ENCODE measurements at regions of chr11 and their contacts with region 1.

Region 1: DNA sequence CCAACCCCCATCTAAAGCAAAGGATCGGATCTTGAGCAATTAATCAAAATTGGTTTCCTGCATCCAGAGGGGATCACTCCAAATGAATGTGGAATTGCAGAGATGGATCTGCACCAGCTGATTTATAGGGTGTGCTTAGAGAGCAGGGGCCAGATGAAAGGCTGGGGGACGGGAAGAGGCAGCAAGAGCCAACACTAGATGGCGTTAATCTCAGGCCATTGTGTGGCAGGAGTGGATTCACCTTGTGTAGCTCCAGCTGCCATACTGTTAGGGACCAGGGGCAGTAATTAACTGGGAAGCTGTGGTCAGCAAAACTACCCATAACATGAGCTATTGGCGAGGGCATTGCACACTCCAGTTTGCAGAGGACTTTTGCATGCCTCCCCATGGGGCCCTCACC is 35.6 kb downstream of the SERPINH1 start:
- DNase-seq: peak; percentile 61
- ATAC-seq: peak; percentile 90
- H3K4me3 Mint-ChIP-seq: no peak overlapping the region
- H3K27ac Mint-ChIP-seq: no peak overlapping the region
- H3K4me1 Mint-ChIP-seq: peaks cover 21% of the 10 kb centered on the region
- H3K27me3 Mint-ChIP-seq: no peaks in the 10 kb centered on the region; the same call in 1 of the 2 replicates
- CTCF ChIP-seq: no peak; the same call in 1 of the 2 replicates

Region 2: DNA sequence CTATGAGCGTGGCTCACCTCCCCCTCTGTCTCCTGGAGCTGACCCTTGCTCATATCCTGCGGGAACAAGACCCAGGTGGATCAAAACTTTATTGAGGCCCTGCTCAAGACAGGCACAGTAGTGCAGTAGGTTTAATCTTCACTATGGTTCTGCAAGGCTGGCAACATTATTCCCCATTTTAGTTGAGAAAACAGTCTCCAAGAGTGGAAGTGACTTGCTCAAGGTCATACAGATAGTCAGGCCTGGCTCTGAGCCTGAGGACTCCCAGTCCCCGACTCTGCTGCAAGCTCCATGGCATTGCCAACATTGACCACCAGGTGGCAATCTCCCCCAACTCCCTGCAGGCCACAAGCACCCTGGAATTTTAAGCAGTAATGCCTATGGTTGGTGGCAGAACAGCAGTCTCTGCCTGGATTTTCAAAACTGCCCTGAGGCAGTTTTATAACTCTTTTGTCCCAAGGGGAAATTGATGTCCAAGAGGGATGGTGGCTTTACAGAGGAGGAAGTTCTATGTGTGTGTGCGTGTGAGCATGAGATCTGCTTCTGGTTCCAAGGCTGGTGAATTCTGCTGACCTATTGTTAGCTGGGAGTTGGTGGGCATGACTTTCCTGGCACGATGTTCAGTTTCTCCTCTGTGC is 574.8 kb before region 1 on chr11:
- CTCF ChIA-PET with region 1: no interaction called
- POLR2A ChIA-PET with region 1: no interaction called
- DNase-seq: peak; percentile 91
- ATAC-seq: peak; percentile 99
- H3K4me3 Mint-ChIP-seq: no peak overlapping the region
- H3K27ac Mint-ChIP-seq: no peak overlapping the region
- H3K4me1 Mint-ChIP-seq: no peaks in the 10 kb centered on the region
- H3K27me3 Mint-ChIP-seq: peaks cover 4% of the 10 kb centered on the region
- CTCF ChIP-seq: peak; percentile 97

Region 3: GRCh38 chr11:75510004-75510722 is 87.5 kb before region 1 on chr11:
- CTCF ChIA-PET with region 1: no interaction called
- POLR2A ChIA-PET with region 1: no interaction called
- DNase-seq: no peak
- ATAC-seq: no peak
- H3K4me3 Mint-ChIP-seq: no peak overlapping the region
- H3K27ac Mint-ChIP-seq: no peak overlapping the region
- H3K4me1 Mint-ChIP-seq: no peaks in the 10 kb centered on the region
- H3K27me3 Mint-ChIP-seq: no peaks in the 10 kb centered on the region
- CTCF ChIP-seq: no peak

Region 4: GRCh38 chr11:75554258-75555022 is 43.2 kb before region 1 on chr11:
- CTCF ChIA-PET with region 1: interaction called, 10 read pairs
- POLR2A ChIA-PET with region 1: interaction called, 3 read pairs
- DNase-seq: peak; percentile 89
- ATAC-seq: peak; percentile 95
- H3K4me3 Mint-ChIP-seq: peak overlapping the region; percentile 32; the same call in 1 of the 2 replicates
- H3K27ac Mint-ChIP-seq: peak overlapping the region; percentile 96
- H3K4me1 Mint-ChIP-seq: peaks cover 48% of the 10 kb centered on the region
- H3K27me3 Mint-ChIP-seq: peaks cover 2% of the 10 kb centered on the region; the same call in 1 of the 2 replicates
- CTCF ChIP-seq: no peak

Region 5: GRCh38 chr11:75577207-75577606 is 20.4 kb before region 1 on chr11:
- CTCF ChIA-PET with region 1: interaction called, 110 read pairs
- POLR2A ChIA-PET with region 1: interaction called, 3 read pairs
- DNase-seq: peak; percentile 78
- ATAC-seq: peak; percentile 5; the same call in 1 of the 2 replicates
- H3K4me3 Mint-ChIP-seq: no peak overlapping the region
- H3K27ac Mint-ChIP-seq: no peak overlapping the region
- H3K4me1 Mint-ChIP-seq: peaks cover 18% of the 10 kb centered on the region
- H3K27me3 Mint-ChIP-seq: peaks cover 13% of the 10 kb centered on the region
- CTCF ChIP-seq: peak; percentile 56; the same call in 1 of the 2 replicates

Region 6: DNA sequence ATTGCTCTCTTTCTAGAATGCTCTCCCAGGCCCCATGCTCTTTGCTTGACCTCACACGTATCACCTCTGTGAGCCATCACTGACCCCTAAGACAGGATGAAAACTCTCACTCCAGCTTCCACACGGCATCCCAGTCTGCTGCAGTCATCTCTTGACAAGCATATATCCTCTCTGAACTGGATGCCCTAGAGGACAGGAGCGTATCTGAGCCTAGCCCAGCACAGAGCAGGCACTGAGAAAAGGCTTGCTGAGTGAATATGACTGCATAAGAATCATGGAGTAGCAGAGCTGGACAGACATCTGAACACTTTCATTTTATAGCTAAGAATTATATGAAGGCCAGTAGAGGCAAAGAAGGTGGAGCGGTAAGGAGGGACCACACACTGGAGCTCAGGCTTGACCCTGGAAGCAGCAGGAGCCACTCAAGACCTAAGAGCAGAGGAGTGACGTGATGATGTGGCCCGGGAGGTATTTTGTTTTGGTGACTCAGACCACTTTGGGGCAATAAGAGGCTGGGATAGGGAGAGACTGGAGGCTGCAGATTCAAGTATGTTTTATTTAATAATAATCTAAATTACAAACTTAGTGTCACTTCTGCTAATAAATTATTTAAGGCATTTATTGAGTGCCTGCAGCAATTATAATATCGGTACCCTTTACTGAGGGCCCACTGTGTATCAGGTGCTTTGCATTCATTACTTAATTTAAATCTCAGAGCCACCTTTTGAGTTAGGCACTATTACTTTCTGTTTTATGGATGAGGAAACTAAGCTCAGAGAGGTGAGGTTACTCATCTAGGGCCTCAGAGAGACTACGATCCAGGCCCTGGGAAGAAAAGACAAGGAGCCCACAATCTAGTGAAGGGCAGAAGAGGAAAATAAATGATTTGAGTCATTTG is 28.6 kb after region 1 on chr11:
- CTCF ChIA-PET with region 1: interaction called, 29 read pairs
- POLR2A ChIA-PET with region 1: no interaction called
- DNase-seq: no peak
- ATAC-seq: no peak
- H3K4me3 Mint-ChIP-seq: no peak overlapping the region
- H3K27ac Mint-ChIP-seq: no peak overlapping the region
- H3K4me1 Mint-ChIP-seq: peaks cover 26% of the 10 kb centered on the region
- H3K27me3 Mint-ChIP-seq: no peaks in the 10 kb centered on the region
- CTCF ChIP-seq: no peak

Region 7: DNA sequence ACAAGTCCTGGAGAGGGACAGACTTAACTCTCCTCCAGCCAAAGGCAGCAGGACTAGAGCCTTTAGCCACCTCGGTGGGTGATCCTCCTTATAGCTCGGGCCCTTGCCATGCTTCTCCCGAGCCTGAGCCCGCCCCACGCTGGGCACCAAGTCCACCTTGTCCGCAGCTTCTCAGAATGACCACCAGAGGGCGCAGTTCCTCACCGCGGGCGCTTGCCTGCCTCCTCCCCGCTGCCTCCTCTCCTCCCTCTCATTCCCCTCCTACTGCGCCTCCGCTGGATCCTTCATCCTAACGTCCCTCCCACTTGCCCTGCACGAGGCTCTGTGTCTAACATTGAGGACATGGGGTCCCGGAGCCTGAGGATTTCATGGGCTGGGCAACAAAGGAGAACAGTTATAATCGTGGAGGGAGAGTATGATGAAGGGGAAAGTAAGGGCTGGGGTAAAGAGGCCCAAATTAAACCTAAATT is 108.7 kb after region 1 on chr11:
- CTCF ChIA-PET with region 1: interaction called, 31 read pairs
- POLR2A ChIA-PET with region 1: no interaction called
- DNase-seq: peak; percentile 80
- ATAC-seq: peak; percentile 99
- H3K4me3 Mint-ChIP-seq: no peak overlapping the region
- H3K27ac Mint-ChIP-seq: no peak overlapping the region
- H3K4me1 Mint-ChIP-seq: no peaks in the 10 kb centered on the region
- H3K27me3 Mint-ChIP-seq: peaks cover 19% of the 10 kb centered on the region
- CTCF ChIP-seq: peak; percentile 96

Region 8: GRCh38 chr11:75982309-75982708 is 384.7 kb after region 1 on chr11:
- CTCF ChIA-PET with region 1: no interaction called
- POLR2A ChIA-PET with region 1: no interaction called
- DNase-seq: no peak
- ATAC-seq: peak; percentile 41; the same call in 1 of the 2 replicates
- H3K4me3 Mint-ChIP-seq: peak overlapping the region; percentile 69; the same call in 1 of the 2 replicates
- H3K27ac Mint-ChIP-seq: no peak overlapping the region
- H3K4me1 Mint-ChIP-seq: peaks cover 24% of the 10 kb centered on the region
- H3K27me3 Mint-ChIP-seq: no peaks in the 10 kb centered on the region; the same call in 1 of the 2 replicates
- CTCF ChIP-seq: no peak

Region 9: GRCh38 chr11:76184551-76184993 is 586.9 kb after region 1 on chr11:
- CTCF ChIA-PET with region 1: no interaction called
- POLR2A ChIA-PET with region 1: no interaction called
- DNase-seq: no peak
- ATAC-seq: no peak; the same call in 1 of the 2 replicates
- H3K4me3 Mint-ChIP-seq: no peak overlapping the region
- H3K27ac Mint-ChIP-seq: no peak overlapping the region
- H3K4me1 Mint-ChIP-seq: 0 out of 2 replicates have a peak, but pooled peaks cover 4% of the 10 kb centered on the region
- H3K27me3 Mint-ChIP-seq: no peaks in the 10 kb centered on the region
- CTCF ChIP-seq: no peak